Caco-2 (cell line): ENCODE measurements at regions of chr11 and their contacts with region 1.

Region 1: DNA sequence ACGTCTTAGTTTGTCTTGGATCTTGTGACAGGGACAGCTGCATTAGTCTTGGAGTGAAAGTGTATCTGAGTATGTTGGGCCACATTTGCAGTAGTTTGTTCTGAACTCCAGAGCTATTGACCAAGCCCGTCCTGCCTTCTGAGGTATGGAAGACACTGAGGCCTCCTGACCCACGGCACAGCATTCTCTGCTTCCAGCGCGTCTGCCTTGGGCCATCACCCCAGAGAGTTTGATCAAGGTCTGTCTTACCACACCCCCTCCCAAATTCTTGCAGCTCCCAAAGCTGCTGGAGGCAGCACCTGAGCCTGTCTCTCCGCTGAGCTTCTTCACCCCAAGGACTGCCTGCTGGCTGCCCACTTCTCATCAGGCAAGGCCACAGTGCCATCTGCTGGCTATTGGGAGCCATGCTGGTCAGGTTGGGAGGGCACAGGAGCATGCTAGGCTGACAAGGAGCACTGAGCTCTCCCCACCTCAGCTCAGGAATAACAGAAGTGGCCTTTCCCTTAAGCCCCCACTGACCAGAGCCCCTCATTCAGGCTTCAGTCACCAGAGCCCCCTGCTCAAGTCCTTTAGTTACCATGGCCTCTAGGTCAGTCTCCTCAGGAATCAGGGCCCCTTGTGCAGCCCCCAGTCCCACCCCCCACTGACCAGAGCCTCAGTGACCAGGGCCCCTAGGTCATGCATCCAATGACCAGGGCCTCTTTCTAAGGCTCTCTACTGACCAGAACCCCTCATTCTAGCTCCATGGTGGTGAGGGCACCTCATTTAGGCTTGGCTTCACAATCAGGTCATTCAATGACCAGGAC is 27.2 kb upstream of the SMPD1 start:
- DNase-seq: peak; percentile 86 to 87
- H3K4me3 ChIP-seq: no peak overlapping the region
- H3K4me3 Mint-ChIP-seq: no peak overlapping the region
- H3K27ac Mint-ChIP-seq: no peak overlapping the region
- H3K4me1 ChIP-seq: peaks cover 16% of the 10 kb centered on the region; the same call in 1 of the 2 replicates
- H3K4me1 Mint-ChIP-seq: no peaks in the 10 kb centered on the region
- H3K27me3 ChIP-seq: no peaks in the 10 kb centered on the region
- H3K27me3 Mint-ChIP-seq: no peaks in the 10 kb centered on the region
- CTCF ChIP-seq: peak; percentile 79 to 97

Region 2: GRCh38 chr11:6022956-6023355 is 340.1 kb before region 1 on chr11:
- CTCF ChIA-PET with region 1: interaction called, 12 read pairs
- POLR2A ChIA-PET with region 1: no interaction called
- intact Hi-C with region 1: no loop called
- DNase-seq: peak in 1 of 2 experiments; percentile 34
- H3K4me3 ChIP-seq: no peak overlapping the region
- H3K4me3 Mint-ChIP-seq: no peak overlapping the region
- H3K27ac Mint-ChIP-seq: no peak overlapping the region
- H3K4me1 ChIP-seq: no peaks in the 10 kb centered on the region
- H3K4me1 Mint-ChIP-seq: no peaks in the 10 kb centered on the region
- H3K27me3 ChIP-seq: no peaks in the 10 kb centered on the region
- H3K27me3 Mint-ChIP-seq: peaks cover 14% of the 10 kb centered on the region
- CTCF ChIP-seq: peak; percentile 51 to 52

Region 3: GRCh38 chr11:6251120-6251733 is 111.8 kb before region 1 on chr11:
- CTCF ChIA-PET with region 1: interaction called, 36 read pairs
- POLR2A ChIA-PET with region 1: no interaction called
- intact Hi-C with region 1: loop called (anchors 1 kb)
- DNase-seq: peak; percentile 81 to 83
- H3K4me3 ChIP-seq: no peak overlapping the region
- H3K4me3 Mint-ChIP-seq: no peak overlapping the region
- H3K27ac Mint-ChIP-seq: no peak overlapping the region
- H3K4me1 ChIP-seq: peaks cover 15% of the 10 kb centered on the region
- H3K4me1 Mint-ChIP-seq: peaks cover 17% of the 10 kb centered on the region
- H3K27me3 ChIP-seq: no peaks in the 10 kb centered on the region
- H3K27me3 Mint-ChIP-seq: no peaks in the 10 kb centered on the region
- CTCF ChIP-seq: peak; percentile 69 to 91

Region 4: GRCh38 chr11:6298605-6299004 is 64.5 kb before region 1 on chr11:
- CTCF ChIA-PET with region 1: interaction called, 20 read pairs
- POLR2A ChIA-PET with region 1: no interaction called
- intact Hi-C with region 1: no loop called
- DNase-seq: peak; percentile 72 to 76
- H3K4me3 ChIP-seq: no peak overlapping the region
- H3K4me3 Mint-ChIP-seq: no peak overlapping the region
- H3K27ac Mint-ChIP-seq: no peak overlapping the region
- H3K4me1 ChIP-seq: no peaks in the 10 kb centered on the region
- H3K4me1 Mint-ChIP-seq: no peaks in the 10 kb centered on the region
- H3K27me3 ChIP-seq: no peaks in the 10 kb centered on the region
- H3K27me3 Mint-ChIP-seq: no peaks in the 10 kb centered on the region
- CTCF ChIP-seq: peak; percentile 75 to 96

Region 5: GRCh38 chr11:6315811-6316425 is 47.2 kb before region 1 on chr11:
- CTCF ChIA-PET with region 1: interaction called, 8 read pairs
- POLR2A ChIA-PET with region 1: no interaction called
- intact Hi-C with region 1: loop called (anchors 2 kb)
- DNase-seq: peak; percentile 61 to 68
- H3K4me3 ChIP-seq: no peak overlapping the region
- H3K4me3 Mint-ChIP-seq: no peak overlapping the region
- H3K27ac Mint-ChIP-seq: no peak overlapping the region
- H3K4me1 ChIP-seq: 0 out of 2 replicates have a peak, but pooled peaks cover 6% of the 10 kb centered on the region
- H3K4me1 Mint-ChIP-seq: peaks cover 9% of the 10 kb centered on the region
- H3K27me3 ChIP-seq: no peaks in the 10 kb centered on the region
- H3K27me3 Mint-ChIP-seq: peaks cover 4% of the 10 kb centered on the region
- CTCF ChIP-seq: peak; percentile 86 to 96

Region 6: DNA sequence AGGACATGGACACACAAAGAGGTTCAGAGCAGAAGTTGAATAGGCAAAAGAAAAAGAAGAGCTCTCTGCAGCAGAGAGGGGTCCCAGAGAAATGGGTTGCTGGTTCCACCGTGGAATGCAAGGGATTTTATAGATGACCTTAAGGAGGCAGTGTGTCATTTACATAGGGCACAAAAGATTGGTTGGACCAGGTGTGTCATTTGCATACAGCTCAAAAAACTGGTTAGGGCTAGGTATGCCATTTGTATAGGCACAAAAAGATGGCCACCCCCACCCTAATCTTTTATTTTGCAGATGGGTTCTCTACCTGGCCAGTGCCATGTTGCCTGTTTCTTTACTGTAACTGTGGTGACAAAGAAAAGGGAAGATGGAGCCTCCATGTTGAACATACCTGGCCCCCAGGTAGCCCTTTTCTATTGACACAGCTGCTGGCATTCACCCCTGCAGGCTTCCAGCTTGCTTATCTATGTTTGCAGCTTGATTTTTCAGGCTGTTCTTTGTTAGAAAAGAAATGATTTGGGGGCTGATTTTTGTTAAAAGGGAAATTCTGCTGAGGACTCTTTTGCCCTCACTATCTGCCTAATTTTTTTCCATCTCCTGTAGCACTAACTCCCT is 39.7 kb before region 1 on chr11:
- CTCF ChIA-PET with region 1: interaction called, 22 read pairs
- POLR2A ChIA-PET with region 1: no interaction called
- intact Hi-C with region 1: no loop called
- DNase-seq: peak; percentile 39 to 50
- H3K4me3 ChIP-seq: no peak overlapping the region
- H3K4me3 Mint-ChIP-seq: peak overlapping the region; percentile 8
- H3K27ac Mint-ChIP-seq: peak overlapping the region; percentile 64
- H3K4me1 ChIP-seq: peaks cover 9% of the 10 kb centered on the region; the same call in 1 of the 2 replicates
- H3K4me1 Mint-ChIP-seq: peaks cover 21% of the 10 kb centered on the region
- H3K27me3 ChIP-seq: no peaks in the 10 kb centered on the region
- H3K27me3 Mint-ChIP-seq: no peaks in the 10 kb centered on the region
- CTCF ChIP-seq: no peak

Region 7: GRCh38 chr11:6345366-6345765 is 17.7 kb before region 1 on chr11:
- CTCF ChIA-PET with region 1: interaction called, 11 read pairs
- POLR2A ChIA-PET with region 1: no interaction called
- intact Hi-C with region 1: no loop called
- DNase-seq: no peak
- H3K4me3 ChIP-seq: no peak overlapping the region
- H3K4me3 Mint-ChIP-seq: no peak overlapping the region
- H3K27ac Mint-ChIP-seq: no peak overlapping the region
- H3K4me1 ChIP-seq: no peaks in the 10 kb centered on the region
- H3K4me1 Mint-ChIP-seq: peaks cover 7% of the 10 kb centered on the region
- H3K27me3 ChIP-seq: no peaks in the 10 kb centered on the region
- H3K27me3 Mint-ChIP-seq: no peaks in the 10 kb centered on the region
- CTCF ChIP-seq: no peak

Region 8: GRCh38 chr11:6431861-6432260 is 68.8 kb after region 1 on chr11:
- CTCF ChIA-PET with region 1: no interaction called
- POLR2A ChIA-PET with region 1: no interaction called
- intact Hi-C with region 1: no loop called
- DNase-seq: no peak
- H3K4me3 ChIP-seq: no peak overlapping the region
- H3K4me3 Mint-ChIP-seq: no peak overlapping the region
- H3K27ac Mint-ChIP-seq: no peak overlapping the region
- H3K4me1 ChIP-seq: peaks cover 20% of the 10 kb centered on the region
- H3K4me1 Mint-ChIP-seq: peaks cover 31% of the 10 kb centered on the region
- H3K27me3 ChIP-seq: no peaks in the 10 kb centered on the region
- H3K27me3 Mint-ChIP-seq: no peaks in the 10 kb centered on the region
- CTCF ChIP-seq: no peak